ENCODE measurements at regions of chr3 and their contacts with region 1.

Region 1: GRCh38 chr3:172673210-172673679 is 37.6 kb downstream of the NCEH1 start:
- DNase-seq: no peak
- H3K4me3 ChIP-seq: no peak overlapping the region
- H3K27ac ChIP-seq: no peak overlapping the region
- H3K27me3 ChIP-seq: no peaks in the 10 kb centered on the region
- CTCF ChIP-seq: peak; percentile 77

Region 2: GRCh38 chr3:172648747-172649146 is 24.5 kb before region 1 on chr3:
- CTCF ChIA-PET with region 1: interaction called, 13 read pairs
- POLR2A ChIA-PET with region 1: no interaction called
- DNase-seq: no peak
- H3K4me3 ChIP-seq: no peak overlapping the region
- H3K27ac ChIP-seq: no peak overlapping the region
- H3K27me3 ChIP-seq: no peaks in the 10 kb centered on the region
- CTCF ChIP-seq: no peak

Region 3: GRCh38 chr3:172685346-172686214 is 12.3 kb after region 1 on chr3:
- CTCF ChIA-PET with region 1: interaction called, 19 read pairs
- POLR2A ChIA-PET with region 1: no interaction called
- DNase-seq: no peak
- H3K4me3 ChIP-seq: no peak overlapping the region
- H3K27ac ChIP-seq: no peak overlapping the region
- H3K27me3 ChIP-seq: no peaks in the 10 kb centered on the region
- CTCF ChIP-seq: no peak

Region 4: DNA sequence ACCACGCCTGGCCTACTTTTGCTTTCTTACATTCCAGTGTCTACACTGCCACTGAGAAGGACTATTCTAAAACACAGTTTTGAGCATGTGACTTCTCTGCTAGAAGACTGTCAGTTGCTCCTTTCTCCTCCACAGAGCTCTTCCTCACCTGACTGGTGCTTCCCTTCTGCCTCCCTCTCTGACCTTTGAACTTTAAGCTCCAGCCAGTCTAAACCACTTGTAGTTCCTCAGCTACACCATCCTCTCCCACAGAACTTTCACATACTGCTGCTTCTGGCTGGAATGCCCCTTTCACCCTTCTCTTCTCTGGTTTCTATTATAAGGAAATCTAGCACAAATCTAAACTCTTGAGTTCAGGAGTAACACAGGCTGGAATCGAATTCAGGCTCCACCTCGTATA is 28.5 kb after region 1 on chr3:
- CTCF ChIA-PET with region 1: interaction called, 12 read pairs
- POLR2A ChIA-PET with region 1: no interaction called
- DNase-seq: no peak
- H3K4me3 ChIP-seq: no peak overlapping the region
- H3K27ac ChIP-seq: no peak overlapping the region
- H3K27me3 ChIP-seq: no peaks in the 10 kb centered on the region
- CTCF ChIP-seq: no peak

Region 5: GRCh38 chr3:172750368-172751174 is 77.3 kb after region 1 on chr3 and contains the start of gene ECT2:
- CTCF ChIA-PET with region 1: interaction called, 47 read pairs
- POLR2A ChIA-PET with region 1: interaction called, 5 read pairs
- DNase-seq: peak; percentile 99
- H3K4me3 ChIP-seq: peak within 1 kb of the TSS; percentile 91
- H3K27ac ChIP-seq: peak within 1 kb of the TSS; percentile 97
- H3K27me3 ChIP-seq: no peaks in the 10 kb centered on the region
- CTCF ChIP-seq: peak; percentile 72
- polyA plus RNA-seq, gene ECT2: 14.0 and 21.8 TPM in 2 replicates

Measured in AG04450 (cell line).